CD8-positive, alpha-beta T cell (primary cell): ENCODE measurements at regions of chr19 and their contacts with region 1.

Region 1: DNA sequence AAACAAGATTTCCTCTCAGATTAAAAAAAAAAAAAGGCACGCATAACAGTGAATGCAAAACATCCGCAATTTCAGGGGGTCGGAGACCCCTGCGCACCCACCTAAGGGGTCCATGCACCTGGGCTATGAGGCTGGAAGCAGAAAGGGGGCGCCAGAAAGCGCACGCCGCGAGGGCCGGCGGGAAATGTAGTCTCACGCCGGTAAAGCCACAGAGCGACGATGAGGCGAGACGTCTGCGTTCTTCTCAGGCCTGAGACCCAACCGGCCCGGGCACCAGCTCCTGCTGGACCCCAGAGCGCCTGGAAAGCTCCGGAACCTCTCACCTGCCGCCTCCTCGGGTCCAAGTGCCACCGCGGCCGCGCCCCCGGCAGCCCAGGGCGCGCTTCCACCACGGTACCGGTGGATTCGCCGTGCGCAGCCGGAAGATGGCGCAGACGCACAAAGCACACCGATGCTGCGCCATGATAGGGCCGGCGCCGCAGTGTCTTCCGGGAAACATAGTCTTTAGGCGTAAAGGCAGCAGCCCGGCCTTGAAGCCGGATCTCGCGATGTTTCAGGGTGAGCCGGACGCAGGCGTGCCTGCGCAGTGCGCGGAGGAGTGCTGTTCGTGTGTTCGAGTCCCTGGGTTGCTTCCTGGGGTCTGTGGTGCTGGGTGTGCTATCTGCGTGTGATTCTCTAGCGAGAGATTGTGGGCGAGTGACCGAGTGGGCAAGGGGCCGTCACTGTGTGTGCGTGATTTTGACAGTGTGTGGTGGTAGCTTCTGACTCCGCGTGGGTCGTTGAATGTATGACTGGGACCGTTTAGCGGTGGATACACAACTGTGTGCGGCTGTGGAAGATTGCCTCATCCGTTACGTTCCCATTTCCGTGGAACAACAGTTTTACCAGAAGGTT is at the start of gene ZNF582:
- DNase-seq: peak; percentile 83 to 97 (median 89)
- ATAC-seq: peak; percentile 97
- H3K4me3 ChIP-seq: peak within 1 kb of the TSS; percentile 77 to 87
- H3K4me3 Mint-ChIP-seq: peak within 1 kb of the TSS; percentile 100
- H3K27ac ChIP-seq: peak within 1 kb of the TSS; percentile 94 to 96
- H3K27ac Mint-ChIP-seq: peak within 1 kb of the TSS; percentile 96
- H3K4me1 ChIP-seq: peaks cover 11% of the 10 kb centered on the region
- H3K4me1 Mint-ChIP-seq: peaks cover 22% of the 10 kb centered on the region
- H3K27me3 ChIP-seq: no peaks in the 10 kb centered on the region
- H3K27me3 Mint-ChIP-seq: no peaks in the 10 kb centered on the region
- CTCF ChIP-seq: peak; percentile 71
- total RNA-seq, gene ZNF582: 4.6 to 4.7 TPM

Region 2: DNA sequence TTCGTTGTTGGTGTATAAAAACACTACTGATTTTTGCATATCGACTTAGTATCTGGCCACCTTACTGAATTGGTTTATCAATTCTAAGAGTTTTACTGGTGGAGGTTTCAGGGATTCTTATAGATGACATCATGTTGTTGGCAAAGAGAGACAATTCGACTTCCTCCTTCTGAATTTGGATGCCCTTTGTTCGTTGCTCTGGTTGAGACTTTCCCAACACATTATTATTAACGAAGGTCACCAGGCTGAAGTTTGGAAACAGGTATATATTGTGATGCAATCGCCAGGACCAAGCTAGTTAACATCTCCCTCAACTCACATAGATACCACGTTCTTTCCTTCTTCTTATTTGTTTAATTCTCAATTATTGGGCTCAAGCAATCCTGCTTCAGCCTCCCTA is 193.7 kb before region 1 on chr19:
- CTCF ChIA-PET with region 1: no interaction called
- POLR2A ChIA-PET with region 1: no interaction called
- intact Hi-C with region 1: no loop called
- DNase-seq: no peak
- ATAC-seq: no peak
- H3K4me3 ChIP-seq: no peak overlapping the region
- H3K4me3 Mint-ChIP-seq: no peak overlapping the region
- H3K27ac ChIP-seq: no peak overlapping the region
- H3K27ac Mint-ChIP-seq: no peak overlapping the region
- H3K4me1 ChIP-seq: no peaks in the 10 kb centered on the region
- H3K4me1 Mint-ChIP-seq: no peaks in the 10 kb centered on the region
- H3K27me3 ChIP-seq: no peaks in the 10 kb centered on the region
- H3K27me3 Mint-ChIP-seq: peaks cover 3% of the 10 kb centered on the region
- CTCF ChIP-seq: no peak

Region 3: DNA sequence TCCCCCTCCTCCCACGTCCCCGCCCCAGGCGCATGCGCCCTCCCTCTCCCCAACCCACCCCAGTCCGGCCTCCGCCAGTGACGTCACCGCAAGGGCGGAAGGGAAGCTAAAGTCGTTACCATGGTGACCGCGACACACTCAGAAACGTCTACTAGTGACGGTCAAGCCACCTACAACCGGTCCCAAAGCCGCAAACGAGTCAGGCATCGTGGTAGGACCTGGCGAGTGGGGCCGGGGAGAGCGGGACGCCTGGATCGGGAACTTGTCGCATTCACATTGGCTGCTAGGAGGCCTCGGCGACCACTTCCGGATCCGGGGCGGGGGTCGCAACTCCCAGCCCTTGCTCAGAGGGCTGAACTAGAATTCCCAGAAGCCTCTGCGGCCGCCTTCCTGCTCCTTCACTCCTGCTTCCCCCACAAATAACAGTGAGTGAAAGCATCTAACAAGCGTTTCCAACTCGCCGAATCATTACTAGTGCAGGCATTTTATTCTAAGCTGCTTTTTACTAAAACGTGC is 78.7 kb before region 1 on chr19 and contains the start of gene ZSCAN5A:
- CTCF ChIA-PET with region 1: no interaction called
- POLR2A ChIA-PET with region 1: interaction called, 3 read pairs
- intact Hi-C with region 1: loop called (anchors 1 kb)
- DNase-seq: peak; percentile 93 to 99 (median 98)
- ATAC-seq: peak; percentile 73
- H3K4me3 ChIP-seq: peak within 1 kb of the TSS; percentile 87 to 88
- H3K4me3 Mint-ChIP-seq: peak within 1 kb of the TSS; percentile 95
- H3K27ac ChIP-seq: peak within 1 kb of the TSS; percentile 96 to 100
- H3K27ac Mint-ChIP-seq: peak within 1 kb of the TSS; percentile 99
- H3K4me1 ChIP-seq: peaks cover 21% of the 10 kb centered on the region
- H3K4me1 Mint-ChIP-seq: peaks cover 26% of the 10 kb centered on the region
- H3K27me3 ChIP-seq: no peaks in the 10 kb centered on the region
- H3K27me3 Mint-ChIP-seq: no peaks in the 10 kb centered on the region
- CTCF ChIP-seq: no peak
- total RNA-seq, gene ZSCAN5A: 4.6 to 7.0 TPM

Region 4: DNA sequence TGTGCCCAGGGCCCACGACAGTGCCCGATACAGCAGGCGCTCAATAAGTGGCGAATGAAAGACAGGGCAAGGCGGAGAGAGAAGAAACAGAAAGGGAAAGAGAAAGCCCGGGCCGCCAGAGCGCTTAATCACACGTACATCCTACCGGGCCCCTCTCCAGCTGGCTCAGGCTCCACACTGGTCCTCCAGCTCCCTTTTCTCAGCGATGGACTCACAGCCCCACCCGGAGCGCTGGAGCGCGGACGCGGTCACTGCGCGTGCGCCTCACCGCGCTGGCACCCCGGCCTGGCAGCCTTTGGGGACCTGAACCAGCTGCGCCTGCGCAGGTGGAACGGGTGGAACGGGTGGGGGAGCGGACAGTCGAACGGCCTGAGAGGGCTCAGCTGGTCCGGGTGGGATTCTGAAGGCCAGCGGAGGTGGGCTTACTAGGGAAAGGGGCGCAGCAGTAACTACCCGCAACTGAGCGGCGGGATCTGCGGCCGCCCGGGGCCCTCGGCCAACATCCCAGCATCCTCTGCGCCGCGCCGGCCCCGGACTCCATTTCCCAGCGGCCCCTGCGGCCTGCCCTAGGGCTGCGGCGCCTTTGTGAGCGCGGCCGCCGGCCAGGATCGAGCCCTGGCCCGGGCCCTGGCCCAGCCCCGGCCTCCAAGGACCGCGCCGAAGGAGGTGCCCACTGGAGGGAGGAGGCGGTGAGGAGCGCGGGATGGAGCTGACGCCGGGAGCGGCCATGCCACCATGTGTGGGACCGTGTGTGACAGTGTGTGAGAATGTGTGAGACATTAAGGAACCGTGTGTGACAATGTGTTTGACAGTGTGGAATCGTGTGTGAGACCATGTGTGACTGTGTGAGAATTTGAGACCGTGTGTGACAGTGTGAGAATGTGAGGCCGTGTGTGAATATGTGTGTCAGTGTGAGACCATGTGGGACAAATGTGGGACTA is 10.7 kb after region 1 on chr19 and contains the start of gene ZNF583:
- CTCF ChIA-PET with region 1: no interaction called
- POLR2A ChIA-PET with region 1: interaction called, 12 read pairs
- intact Hi-C with region 1: loop called (anchors 1 kb)
- DNase-seq: peak; percentile 83 to 95 (median 91)
- ATAC-seq: peak; percentile 82
- H3K4me3 ChIP-seq: peak within 1 kb of the TSS; percentile 80 to 93
- H3K4me3 Mint-ChIP-seq: peak within 1 kb of the TSS; percentile 85
- H3K27ac ChIP-seq: peak within 1 kb of the TSS; percentile 83 to 99
- H3K27ac Mint-ChIP-seq: peak within 1 kb of the TSS; percentile 88
- H3K4me1 ChIP-seq: peaks cover 18% of the 10 kb centered on the region
- H3K4me1 Mint-ChIP-seq: peaks cover 32% of the 10 kb centered on the region
- H3K27me3 ChIP-seq: no peaks in the 10 kb centered on the region
- H3K27me3 Mint-ChIP-seq: no peaks in the 10 kb centered on the region
- CTCF ChIP-seq: no peak
- total RNA-seq, gene ZNF583: 1.3 to 2.4 TPM

Region 5: DNA sequence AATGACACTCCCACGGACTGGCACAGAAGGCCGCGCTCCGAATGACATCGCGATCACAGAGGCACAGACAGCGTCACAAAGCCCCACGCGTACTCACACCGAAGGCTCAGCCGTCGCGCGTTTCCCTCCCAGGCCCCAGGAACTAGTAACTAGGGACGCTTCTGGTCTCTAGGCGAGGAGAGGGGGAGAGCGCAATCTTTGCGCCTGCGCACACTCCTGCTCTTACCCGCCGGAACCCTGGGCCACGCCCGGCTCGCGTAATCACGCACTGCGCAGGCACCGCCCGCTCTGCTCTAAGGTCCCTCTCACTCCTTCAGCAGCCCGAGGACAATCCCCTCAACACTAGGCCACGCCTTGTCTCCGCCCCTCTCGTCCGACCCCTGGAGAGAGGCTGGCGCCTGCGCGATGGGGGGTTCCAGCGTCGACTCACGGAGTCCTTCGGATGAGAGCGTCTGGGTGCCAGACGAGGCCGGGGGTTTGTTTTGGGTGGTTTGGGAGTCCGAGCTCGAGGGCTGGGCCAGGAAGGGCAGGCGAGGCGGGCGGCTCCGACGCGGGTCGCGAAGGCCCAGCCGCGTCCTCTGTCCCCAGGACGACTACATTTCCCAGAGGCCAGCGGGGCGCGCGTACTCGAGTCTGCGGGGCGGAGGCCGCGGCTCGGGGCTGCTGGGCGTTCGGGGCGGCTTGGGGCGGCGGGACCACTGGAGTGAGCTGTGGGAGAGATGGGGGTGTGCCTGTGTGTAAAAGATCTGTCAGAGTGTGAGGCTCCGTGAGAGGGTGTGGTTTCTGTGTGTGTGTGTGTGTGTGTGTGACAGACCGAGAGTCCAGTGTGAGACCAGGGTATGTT is 114.3 kb after region 1 on chr19 and contains the start of gene ZNF471:
- CTCF ChIA-PET with region 1: no interaction called
- POLR2A ChIA-PET with region 1: no interaction called
- intact Hi-C with region 1: loop called (anchors 1 kb)
- DNase-seq: peak; percentile 62 to 96 (median 79)
- ATAC-seq: peak; percentile 98
- H3K4me3 ChIP-seq: peak within 1 kb of the TSS; percentile 39 to 73
- H3K4me3 Mint-ChIP-seq: no peak within 1 kb of the TSS
- H3K27ac ChIP-seq: peak within 1 kb of the TSS; percentile 76
- H3K27ac Mint-ChIP-seq: no peak within 1 kb of the TSS
- H3K4me1 ChIP-seq: peaks cover 8% of the 10 kb centered on the region
- H3K4me1 Mint-ChIP-seq: peaks cover 9% of the 10 kb centered on the region
- H3K27me3 ChIP-seq: peaks cover 0 to 3% of the 10 kb centered on the region in 2 experiments
- H3K27me3 Mint-ChIP-seq: peaks cover 3% of the 10 kb centered on the region
- CTCF ChIP-seq: no peak
- total RNA-seq, gene ZNF471: 0.67 to 0.71 TPM

Region 6: DNA sequence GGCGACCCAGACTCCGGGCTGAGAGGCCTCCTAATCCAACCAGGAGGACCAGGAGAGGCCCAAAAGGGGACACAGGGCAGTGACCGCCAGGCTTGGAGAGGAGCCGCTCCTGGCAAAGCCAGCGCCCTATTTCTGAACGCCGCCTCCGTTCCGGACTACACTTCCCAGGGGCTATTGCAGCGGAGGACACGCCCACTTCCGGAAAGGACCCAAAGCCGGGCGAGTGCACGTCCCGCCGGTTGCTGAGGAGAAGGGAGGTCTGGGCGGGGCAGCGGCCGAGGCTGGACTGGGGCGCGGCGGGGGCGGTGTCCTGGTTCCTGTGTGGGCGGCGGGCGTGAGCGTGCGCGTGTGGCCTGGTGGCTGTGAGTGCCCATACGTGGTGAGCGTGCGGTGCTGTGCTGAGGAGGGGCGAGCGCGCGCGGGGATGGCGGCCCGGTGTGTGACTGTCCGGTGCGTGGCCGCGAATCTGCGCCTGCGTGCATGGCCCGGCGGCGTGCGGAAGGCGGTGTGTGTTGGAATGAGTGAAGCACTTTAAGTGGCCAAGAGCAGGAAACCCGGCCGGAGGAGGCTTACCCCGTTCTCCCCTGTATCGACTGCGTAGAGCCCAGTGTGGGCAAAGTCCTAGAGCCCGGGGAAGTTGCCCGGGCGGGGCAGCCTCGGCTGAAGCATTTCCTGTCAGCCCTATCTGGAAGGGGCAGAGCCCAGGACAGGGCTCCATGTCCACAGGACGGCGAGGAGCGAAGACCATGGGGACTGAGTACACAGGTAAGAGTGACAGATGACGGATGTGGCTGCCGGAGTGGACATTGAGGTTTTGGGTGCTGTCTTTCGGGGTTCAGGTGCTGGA is 174.1 kb after region 1 on chr19 and contains the start of gene ZNF470:
- CTCF ChIA-PET with region 1: no interaction called
- POLR2A ChIA-PET with region 1: no interaction called
- intact Hi-C with region 1: loop called (anchors 1 kb)
- DNase-seq: peak; percentile 71 to 92 (median 86)
- ATAC-seq: peak; percentile 97
- H3K4me3 ChIP-seq: peak within 1 kb of the TSS; percentile 81 to 97
- H3K4me3 Mint-ChIP-seq: peak within 1 kb of the TSS; percentile 98
- H3K27ac ChIP-seq: peak within 1 kb of the TSS; percentile 52 to 61
- H3K27ac Mint-ChIP-seq: peak within 1 kb of the TSS; percentile 84
- H3K4me1 ChIP-seq: peaks cover 6% of the 10 kb centered on the region
- H3K4me1 Mint-ChIP-seq: peaks cover 22% of the 10 kb centered on the region
- H3K27me3 ChIP-seq: no peaks in the 10 kb centered on the region
- H3K27me3 Mint-ChIP-seq: no peaks in the 10 kb centered on the region
- CTCF ChIP-seq: no peak
- total RNA-seq, gene ZNF470: 0.33 to 1.1 TPM

Region 7: GRCh38 chr19:56671613-56671994 is 278.2 kb after region 1 on chr19 and contains the start of gene ZNF835:
- CTCF ChIA-PET with region 1: no interaction called
- POLR2A ChIA-PET with region 1: no interaction called
- intact Hi-C with region 1: loop called in 1 of 2 experiments (anchors 2 kb)
- DNase-seq: peak; percentile 46 to 86 (median 79)
- ATAC-seq: peak; percentile 92
- H3K4me3 ChIP-seq: peak within 1 kb of the TSS; percentile 29 to 66
- H3K4me3 Mint-ChIP-seq: peak within 1 kb of the TSS; percentile 90
- H3K27ac ChIP-seq: peak within 1 kb of the TSS in 1 of 2 experiments; percentile 30
- H3K27ac Mint-ChIP-seq: peak within 1 kb of the TSS; percentile 67
- H3K4me1 ChIP-seq: peaks cover 11% of the 10 kb centered on the region
- H3K4me1 Mint-ChIP-seq: peaks cover 12% of the 10 kb centered on the region
- H3K27me3 ChIP-seq: no peaks in the 10 kb centered on the region
- H3K27me3 Mint-ChIP-seq: no peaks in the 10 kb centered on the region
- CTCF ChIP-seq: no peak
- total RNA-seq, gene ZNF835: 0.46 to 0.75 TPM

Region 8: GRCh38 chr19:58002384-58003173 is 1609.2 kb after region 1 on chr19 and contains the start of gene ZNF606:
- CTCF ChIA-PET with region 1: no interaction called
- POLR2A ChIA-PET with region 1: no interaction called
- intact Hi-C with region 1: loop called in 1 of 2 experiments (anchors 10 kb)
- DNase-seq: peak; percentile 72 to 93 (median 84)
- ATAC-seq: peak; percentile 94
- H3K4me3 ChIP-seq: peak within 1 kb of the TSS; percentile 90 to 93
- H3K4me3 Mint-ChIP-seq: peak within 1 kb of the TSS; percentile 87
- H3K27ac ChIP-seq: peak within 1 kb of the TSS; percentile 82 to 93
- H3K27ac Mint-ChIP-seq: peak within 1 kb of the TSS; percentile 94
- H3K4me1 ChIP-seq: peaks cover 20% of the 10 kb centered on the region
- H3K4me1 Mint-ChIP-seq: peaks cover 34% of the 10 kb centered on the region
- H3K27me3 ChIP-seq: no peaks in the 10 kb centered on the region
- H3K27me3 Mint-ChIP-seq: no peaks in the 10 kb centered on the region
- CTCF ChIP-seq: no peak
- total RNA-seq, gene ZNF606: 11.2 to 13.0 TPM